ENCODE measurements at regions of chr9 and their contacts with region 1.

Region 1: DNA sequence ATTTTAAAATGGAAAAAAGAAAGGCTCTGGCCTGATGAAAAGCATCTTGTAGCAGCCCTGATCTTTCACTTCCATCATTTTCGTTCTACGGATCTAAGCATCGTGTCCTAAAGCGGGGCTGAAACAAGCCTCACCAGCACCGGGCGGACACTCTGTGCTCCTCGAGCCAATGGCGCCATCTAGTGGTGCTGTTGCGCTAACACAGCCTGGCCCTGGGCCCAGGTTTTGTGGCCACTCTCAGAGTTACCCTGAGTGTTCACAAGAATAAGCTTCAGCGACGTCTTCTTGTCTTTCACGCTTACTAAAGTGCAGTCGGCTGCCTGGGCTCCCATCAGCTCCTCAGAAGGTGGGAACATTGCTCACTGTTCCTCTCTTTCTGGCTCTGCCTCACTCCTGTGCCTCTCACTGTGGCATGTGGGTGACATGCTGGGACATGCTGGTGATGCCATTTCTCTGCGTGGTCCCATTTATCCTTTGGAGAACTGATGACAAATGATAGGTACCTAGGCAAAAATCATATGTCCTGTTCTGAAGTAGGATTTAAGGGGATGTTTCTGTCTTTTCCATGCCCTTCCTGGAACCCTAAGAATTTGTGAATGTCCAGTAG is 32.7 kb downstream of the DMRT3 start:
- DNase-seq: peak; percentile 80 to 88 (median 84)
- H3K4me3 ChIP-seq: no peak overlapping the region
- H3K27ac ChIP-seq: no peak overlapping the region
- H3K4me1 ChIP-seq: peaks cover 0 to 5% (median 0%) of the 10 kb centered on the region in 4 experiments
- H3K27me3 ChIP-seq: peaks cover 0 to 6% (median 1%) of the 10 kb centered on the region in 5 experiments

Region 2: GRCh38 chr9:522658-523057 is 486.5 kb before region 1 on chr9:
- CTCF ChIA-PET with region 1: no interaction called
- POLR2A ChIA-PET with region 1: no interaction called
- DNase-seq: no peak
- H3K4me3 ChIP-seq: no peak overlapping the region
- H3K27ac ChIP-seq: no peak overlapping the region
- H3K4me1 ChIP-seq: no peaks in the 10 kb centered on the region
- H3K27me3 ChIP-seq: no peaks in the 10 kb centered on the region

Region 3: DNA sequence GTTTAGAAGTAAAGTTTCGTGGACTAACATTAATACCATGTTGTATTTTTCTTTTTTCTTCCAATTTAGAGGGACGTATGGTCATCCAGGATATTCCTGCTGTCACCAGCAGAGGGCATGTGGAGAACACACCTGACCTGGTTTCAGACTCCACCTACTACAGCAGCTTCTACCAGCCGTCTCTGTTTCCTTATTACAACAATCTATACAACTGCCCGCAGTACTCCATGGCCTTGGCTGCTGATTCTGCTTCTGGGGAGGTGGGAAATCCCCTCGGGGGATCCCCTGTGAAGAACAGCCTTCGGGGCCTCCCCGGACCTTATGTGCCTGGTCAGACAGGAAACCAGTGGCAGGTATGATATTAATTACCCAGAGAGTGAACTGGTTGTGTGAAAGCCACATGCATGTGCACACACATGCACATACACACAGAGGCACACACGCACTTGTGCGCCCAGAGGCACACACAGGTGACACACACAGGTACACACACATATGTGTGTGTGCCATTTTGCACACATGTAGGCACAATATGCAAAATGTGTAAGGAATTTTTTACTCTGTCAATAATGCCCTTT is 115.3 kb before region 1 on chr9:
- CTCF ChIA-PET with region 1: interaction called, 108 read pairs
- POLR2A ChIA-PET with region 1: no interaction called
- DNase-seq: peak; percentile 67 to 90 (median 87)
- H3K4me3 ChIP-seq: peak overlapping the region in 2 of 7 experiments; percentile 20 to 29
- H3K27ac ChIP-seq: no peak overlapping the region
- H3K4me1 ChIP-seq: peaks cover 0 to 11% (median 3%) of the 10 kb centered on the region in 4 experiments
- H3K27me3 ChIP-seq: peaks cover 0 to 23% (median 10%) of the 10 kb centered on the region in 5 experiments

Region 4: GRCh38 chr9:976943-977837 is 32.0 kb before region 1 on chr9:
- CTCF ChIA-PET with region 1: interaction called, 29 read pairs
- POLR2A ChIA-PET with region 1: no interaction called
- DNase-seq: peak in 1 of 3 donors; percentile 50
- H3K4me3 ChIP-seq: peak overlapping the region in 4 of 7 experiments; percentile 28 to 45 (median 34)
- H3K27ac ChIP-seq: no peak overlapping the region
- H3K4me1 ChIP-seq: peaks cover 0 to 16% (median 7%) of the 10 kb centered on the region in 4 experiments
- H3K27me3 ChIP-seq: peaks cover 50 to 98% (median 77%) of the 10 kb centered on the region in 5 experiments

Region 5: DNA sequence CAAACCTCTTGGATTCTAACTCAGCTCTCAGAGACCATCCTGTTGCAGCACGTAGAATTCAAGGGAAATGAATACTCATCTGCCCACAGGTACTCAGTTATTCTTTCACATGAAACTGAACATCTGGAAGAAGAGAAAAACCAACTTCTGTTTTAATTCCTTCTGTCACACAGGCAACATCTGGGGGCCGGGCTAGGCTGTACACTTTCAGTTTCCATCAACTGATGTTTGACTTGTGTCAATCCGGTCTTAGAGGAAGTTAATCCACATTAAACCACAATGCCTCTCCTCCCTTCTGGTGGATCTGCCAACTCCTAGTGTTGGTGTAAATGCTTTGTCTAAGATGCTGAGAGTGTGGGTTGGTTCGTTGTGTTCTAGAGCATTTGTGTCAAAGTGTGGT is 15.2 kb before region 1 on chr9:
- CTCF ChIA-PET with region 1: interaction called, 26 read pairs
- POLR2A ChIA-PET with region 1: no interaction called
- DNase-seq: no peak
- H3K4me3 ChIP-seq: no peak overlapping the region
- H3K27ac ChIP-seq: no peak overlapping the region
- H3K4me1 ChIP-seq: no peaks in the 10 kb centered on the region
- H3K27me3 ChIP-seq: peaks cover 4 to 58% (median 22%) of the 10 kb centered on the region in 5 experiments

Region 6: DNA sequence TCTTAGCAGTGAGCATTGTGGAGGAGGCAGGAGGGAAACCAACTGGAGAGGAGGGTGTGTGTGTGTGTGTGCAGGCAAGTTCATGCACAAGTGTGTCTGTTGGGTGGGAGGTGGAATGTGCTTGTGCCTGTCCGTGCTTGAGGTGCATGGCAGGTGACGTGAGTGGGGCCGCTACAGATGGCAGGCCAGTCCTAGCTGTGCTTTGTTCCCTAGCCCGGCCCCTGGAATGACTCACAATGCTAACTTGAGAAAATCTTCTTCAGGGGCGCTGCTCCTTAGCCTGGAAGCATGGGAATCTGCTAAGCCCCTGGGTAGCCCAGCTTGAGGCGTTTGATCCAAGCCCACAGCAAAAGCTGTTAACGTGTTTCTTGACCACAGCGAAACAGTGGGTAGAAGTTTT is 15.9 kb after region 1 on chr9:
- CTCF ChIA-PET with region 1: interaction called, 24 read pairs
- POLR2A ChIA-PET with region 1: no interaction called
- DNase-seq: peak in 1 of 3 donors; percentile 22
- H3K4me3 ChIP-seq: no peak overlapping the region
- H3K27ac ChIP-seq: no peak overlapping the region
- H3K4me1 ChIP-seq: no peaks in the 10 kb centered on the region
- H3K27me3 ChIP-seq: peaks cover 2 to 69% (median 19%) of the 10 kb centered on the region in 5 experiments

Region 7: GRCh38 chr9:1039589-1039988 is 30.4 kb after region 1 on chr9:
- CTCF ChIA-PET with region 1: interaction called, 10 read pairs
- POLR2A ChIA-PET with region 1: no interaction called
- DNase-seq: no peak
- H3K4me3 ChIP-seq: no peak overlapping the region
- H3K27ac ChIP-seq: no peak overlapping the region
- H3K4me1 ChIP-seq: peaks cover 0 to 9% (median 4%) of the 10 kb centered on the region in 4 experiments
- H3K27me3 ChIP-seq: peaks cover 30 to 92% (median 33%) of the 10 kb centered on the region in 5 experiments

Region 8: GRCh38 chr9:1071730-1072129 is 62.5 kb after region 1 on chr9:
- CTCF ChIA-PET with region 1: no interaction called
- POLR2A ChIA-PET with region 1: no interaction called
- DNase-seq: no peak
- H3K4me3 ChIP-seq: no peak overlapping the region
- H3K27ac ChIP-seq: no peak overlapping the region
- H3K4me1 ChIP-seq: no peaks in the 10 kb centered on the region
- H3K27me3 ChIP-seq: peaks cover 0 to 15% (median 6%) of the 10 kb centered on the region in 5 experiments

Measured in common myeloid progenitor, CD34-positive (primary cell).